CD8-positive, alpha-beta T cell (primary cell): ENCODE measurements at regions of chr10 and their contacts with region 1.

Region 1: DNA sequence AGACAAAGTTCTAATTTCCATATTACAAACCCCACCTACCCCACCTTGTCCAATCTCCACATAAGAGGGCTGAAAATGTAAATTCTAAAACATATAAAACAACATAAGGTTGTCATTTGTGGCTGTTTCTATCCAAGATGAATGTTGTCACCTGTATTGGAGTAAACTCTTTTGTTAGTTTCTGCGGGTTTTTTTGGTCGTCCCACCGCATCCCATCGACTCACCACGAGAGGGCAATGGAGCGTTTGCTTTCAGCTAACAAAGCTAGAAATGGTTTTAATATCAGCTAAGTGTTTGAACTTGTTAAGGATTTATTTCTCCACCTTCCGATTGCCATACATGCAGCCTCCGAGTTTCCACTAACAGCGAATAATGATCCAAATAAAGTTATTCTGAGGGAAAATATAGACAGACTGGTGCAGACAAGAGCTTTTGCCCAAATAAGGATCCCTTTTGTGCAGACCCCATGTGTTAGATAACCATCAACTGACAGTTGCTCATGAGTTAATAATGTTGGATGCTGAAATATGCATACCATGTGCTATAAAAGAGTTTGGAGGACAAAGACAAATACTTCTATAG is 137.2 kb downstream of the ARID5B start:
- DNase-seq: peak; percentile 53 to 82 (median 73)
- ATAC-seq: peak; percentile 89
- H3K4me3 ChIP-seq: no peak overlapping the region
- H3K4me3 Mint-ChIP-seq: peak overlapping the region; percentile 43
- H3K27ac ChIP-seq: no peak overlapping the region
- H3K27ac Mint-ChIP-seq: no peak overlapping the region
- H3K4me1 ChIP-seq: peaks cover 10% of the 10 kb centered on the region
- H3K4me1 Mint-ChIP-seq: peaks cover 54% of the 10 kb centered on the region
- H3K27me3 ChIP-seq: no peaks in the 10 kb centered on the region
- H3K27me3 Mint-ChIP-seq: no peaks in the 10 kb centered on the region
- CTCF ChIP-seq: peak; percentile 86

Region 2: GRCh38 chr10:60964257-60965235 is 1074.2 kb before region 1 on chr10:
- CTCF ChIA-PET with region 1: no interaction called
- POLR2A ChIA-PET with region 1: no interaction called
- intact Hi-C with region 1: no loop called
- DNase-seq: peak in 6 of 9 experiments; percentile 20 to 60 (median 40)
- ATAC-seq: peak; percentile 51
- H3K4me3 ChIP-seq: no peak overlapping the region
- H3K4me3 Mint-ChIP-seq: no peak overlapping the region
- H3K27ac ChIP-seq: no peak overlapping the region
- H3K27ac Mint-ChIP-seq: no peak overlapping the region
- H3K4me1 ChIP-seq: no peaks in the 10 kb centered on the region
- H3K4me1 Mint-ChIP-seq: no peaks in the 10 kb centered on the region
- H3K27me3 ChIP-seq: no peaks in the 10 kb centered on the region
- H3K27me3 Mint-ChIP-seq: peaks cover 9% of the 10 kb centered on the region
- CTCF ChIP-seq: peak; percentile 65

Region 3: DNA sequence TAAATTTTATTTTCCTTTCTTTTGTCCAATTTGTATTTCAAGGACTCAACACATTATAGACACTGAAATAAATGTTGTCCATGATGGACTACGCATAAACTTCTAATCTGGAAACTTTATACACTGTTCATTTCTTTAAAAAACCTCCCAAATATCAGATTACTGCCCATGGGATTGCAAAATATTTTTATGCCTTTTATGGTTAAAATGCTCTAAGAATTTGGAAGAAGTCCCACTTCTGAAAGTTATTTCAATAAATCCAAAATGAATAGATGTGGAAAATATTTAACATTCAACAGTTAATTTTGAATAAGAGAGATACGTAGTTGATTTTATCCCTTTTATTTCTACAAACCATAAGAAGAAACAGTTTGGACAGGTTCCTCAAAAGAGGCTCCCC is 329.9 kb before region 1 on chr10:
- CTCF ChIA-PET with region 1: no interaction called
- POLR2A ChIA-PET with region 1: no interaction called
- intact Hi-C with region 1: no loop called
- DNase-seq: no peak
- ATAC-seq: no peak
- H3K4me3 ChIP-seq: no peak overlapping the region
- H3K4me3 Mint-ChIP-seq: no peak overlapping the region
- H3K27ac ChIP-seq: no peak overlapping the region
- H3K27ac Mint-ChIP-seq: no peak overlapping the region
- H3K4me1 ChIP-seq: no peaks in the 10 kb centered on the region
- H3K4me1 Mint-ChIP-seq: no peaks in the 10 kb centered on the region
- H3K27me3 ChIP-seq: no peaks in the 10 kb centered on the region
- H3K27me3 Mint-ChIP-seq: no peaks in the 10 kb centered on the region
- CTCF ChIP-seq: no peak

Region 4: GRCh38 chr10:61750929-61751471 is 287.7 kb before region 1 on chr10:
- CTCF ChIA-PET with region 1: interaction called, 4 read pairs
- POLR2A ChIA-PET with region 1: interaction called, 6 read pairs
- intact Hi-C with region 1: loop called in 1 of 2 experiments (anchors 10 kb)
- DNase-seq: peak; percentile 27 to 79 (median 64)
- ATAC-seq: peak; percentile 95
- H3K4me3 ChIP-seq: no peak overlapping the region
- H3K4me3 Mint-ChIP-seq: no peak overlapping the region
- H3K27ac ChIP-seq: no peak overlapping the region
- H3K27ac Mint-ChIP-seq: no peak overlapping the region
- H3K4me1 ChIP-seq: peaks cover 9% of the 10 kb centered on the region
- H3K4me1 Mint-ChIP-seq: peaks cover 21% of the 10 kb centered on the region
- H3K27me3 ChIP-seq: no peaks in the 10 kb centered on the region
- H3K27me3 Mint-ChIP-seq: no peaks in the 10 kb centered on the region
- CTCF ChIP-seq: peak; percentile 67

Region 5: DNA sequence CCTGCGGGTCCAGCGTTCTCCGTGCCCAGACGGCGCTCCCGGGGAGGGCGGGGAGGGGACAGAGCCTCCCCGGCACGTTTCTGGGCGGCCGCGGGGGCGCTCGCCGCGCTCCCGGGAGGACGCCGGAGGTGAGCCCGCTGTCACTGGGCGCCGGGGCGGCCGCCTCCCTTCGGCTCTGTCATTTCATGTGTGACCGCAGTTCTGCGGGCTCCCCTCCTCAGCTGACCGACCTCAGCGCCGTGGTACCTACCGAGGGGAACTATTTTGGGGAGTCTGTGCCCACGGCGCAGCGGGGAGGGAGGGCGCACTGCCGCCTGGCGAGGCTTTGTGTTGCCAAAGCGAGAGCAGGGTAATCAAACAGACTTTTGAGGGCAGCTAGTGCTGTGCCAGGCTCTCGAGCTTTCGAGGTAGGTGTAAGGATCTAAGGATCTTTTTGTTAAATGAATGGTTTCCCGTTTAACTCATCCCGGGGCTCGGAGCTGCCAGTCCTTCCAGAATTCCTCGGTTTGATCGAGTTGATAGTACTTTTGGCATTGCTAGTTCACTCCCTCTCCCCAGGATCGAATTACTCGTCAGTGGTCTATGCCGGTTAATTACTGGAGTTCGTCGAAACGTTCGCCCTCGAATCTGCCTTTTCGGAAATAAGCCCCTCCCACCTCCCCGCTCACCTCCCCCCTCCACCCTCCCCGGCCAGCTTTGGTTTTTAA is 135.3 kb before region 1 on chr10:
- CTCF ChIA-PET with region 1: interaction called, 30 read pairs
- POLR2A ChIA-PET with region 1: interaction called, 6 read pairs
- intact Hi-C with region 1: loop called (anchors 2 to 5 kb)
- DNase-seq: peak; percentile 39 to 83 (median 67)
- ATAC-seq: peak; percentile 41
- H3K4me3 ChIP-seq: peak overlapping the region; percentile 91 to 93
- H3K4me3 Mint-ChIP-seq: peak overlapping the region; percentile 84
- H3K27ac ChIP-seq: peak overlapping the region; percentile 94 to 95
- H3K27ac Mint-ChIP-seq: peak overlapping the region; percentile 97
- H3K4me1 ChIP-seq: peaks cover 24% of the 10 kb centered on the region
- H3K4me1 Mint-ChIP-seq: peaks cover 44% of the 10 kb centered on the region
- H3K27me3 ChIP-seq: no peaks in the 10 kb centered on the region
- H3K27me3 Mint-ChIP-seq: no peaks in the 10 kb centered on the region
- CTCF ChIP-seq: peak; percentile 22

Region 6: DNA sequence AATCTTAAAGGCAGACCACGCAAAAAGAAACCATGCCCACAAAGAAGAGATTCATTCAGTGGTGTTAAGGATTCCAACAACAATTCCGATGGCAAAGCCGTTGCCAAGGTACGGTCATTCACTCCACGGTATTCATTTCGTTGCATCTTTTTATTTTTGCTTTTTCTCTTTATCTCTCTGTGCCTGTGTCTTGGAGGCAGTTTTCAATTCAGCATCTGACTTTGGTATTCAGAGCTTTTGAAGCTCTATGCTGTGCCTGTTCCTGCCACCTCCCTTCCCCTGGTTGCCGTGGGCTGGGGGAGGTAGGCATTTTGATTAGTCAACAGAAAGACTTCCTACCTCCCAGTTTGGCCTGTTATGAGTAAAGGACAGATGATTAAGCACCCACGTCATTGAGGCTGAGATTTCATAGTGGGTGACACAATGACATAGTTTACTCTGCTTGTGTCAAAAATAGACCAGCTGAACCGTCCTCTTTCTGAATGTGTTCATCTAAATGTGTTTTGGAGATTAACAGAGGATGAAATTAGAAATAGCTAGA is 12.3 kb after region 1 on chr10:
- CTCF ChIA-PET with region 1: interaction called, 22 read pairs
- POLR2A ChIA-PET with region 1: interaction called, 6 read pairs
- intact Hi-C with region 1: loop called in 1 of 2 experiments (anchors 2 kb)
- DNase-seq: peak; percentile 32 to 87 (median 57)
- ATAC-seq: peak; percentile 74
- H3K4me3 ChIP-seq: peak overlapping the region in 1 of 2 experiments; percentile 36
- H3K4me3 Mint-ChIP-seq: peak overlapping the region; percentile 74
- H3K27ac ChIP-seq: peak overlapping the region; percentile 14 to 73
- H3K27ac Mint-ChIP-seq: peak overlapping the region; percentile 86
- H3K4me1 ChIP-seq: peaks cover 38% of the 10 kb centered on the region
- H3K4me1 Mint-ChIP-seq: peaks cover 78% of the 10 kb centered on the region
- H3K27me3 ChIP-seq: no peaks in the 10 kb centered on the region
- H3K27me3 Mint-ChIP-seq: no peaks in the 10 kb centered on the region
- CTCF ChIP-seq: no peak

Region 7: DNA sequence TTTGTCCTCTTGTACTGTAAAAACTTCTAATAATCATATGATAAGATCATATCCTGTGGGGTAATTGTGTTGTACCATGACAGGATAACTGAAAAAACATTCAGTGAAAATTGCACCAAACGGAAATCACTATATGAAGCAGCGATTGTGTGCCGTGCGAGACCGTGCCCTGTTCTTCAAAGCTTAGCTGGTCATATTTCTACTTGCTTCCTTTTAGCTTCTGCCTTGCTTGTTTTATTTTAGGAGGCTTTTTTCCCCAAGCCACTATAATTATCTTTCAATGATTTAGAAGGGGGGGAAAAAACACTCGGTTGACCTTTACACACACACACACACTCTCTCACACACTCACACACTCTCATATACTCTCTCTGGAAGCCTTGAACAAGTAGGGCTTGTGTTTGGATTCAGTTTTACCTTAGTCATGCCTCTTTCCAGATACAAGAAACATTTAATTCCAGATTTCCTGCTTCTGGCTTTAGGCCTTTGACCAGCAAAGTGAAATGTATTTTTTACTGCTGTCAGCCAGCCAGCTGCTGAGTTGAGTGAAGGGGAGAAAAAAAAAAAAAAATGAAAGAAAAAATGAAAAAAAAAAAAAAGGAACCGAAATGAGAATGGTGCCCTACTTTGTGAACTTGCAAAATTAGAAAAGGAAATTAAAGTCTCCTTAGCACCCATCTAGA is 44.2 kb after region 1 on chr10:
- CTCF ChIA-PET with region 1: interaction called, 5 read pairs
- POLR2A ChIA-PET with region 1: no interaction called
- intact Hi-C with region 1: loop called in 1 of 2 experiments (anchors 2 kb)
- DNase-seq: peak in 8 of 9 experiments; percentile 9 to 68 (median 36)
- ATAC-seq: peak; percentile 86
- H3K4me3 ChIP-seq: no peak overlapping the region
- H3K4me3 Mint-ChIP-seq: peak overlapping the region; percentile 46
- H3K27ac ChIP-seq: peak overlapping the region in 1 of 2 experiments; percentile 68
- H3K27ac Mint-ChIP-seq: peak overlapping the region; percentile 55
- H3K4me1 ChIP-seq: peaks cover 19% of the 10 kb centered on the region
- H3K4me1 Mint-ChIP-seq: peaks cover 43% of the 10 kb centered on the region
- H3K27me3 ChIP-seq: no peaks in the 10 kb centered on the region
- H3K27me3 Mint-ChIP-seq: no peaks in the 10 kb centered on the region
- CTCF ChIP-seq: no peak

Region 8: GRCh38 chr10:62237966-62238365 is 199.3 kb after region 1 on chr10:
- CTCF ChIA-PET with region 1: interaction called, 138 read pairs
- POLR2A ChIA-PET with region 1: no interaction called
- intact Hi-C with region 1: no loop called
- DNase-seq: no peak
- ATAC-seq: no peak
- H3K4me3 ChIP-seq: no peak overlapping the region
- H3K4me3 Mint-ChIP-seq: no peak overlapping the region
- H3K27ac ChIP-seq: no peak overlapping the region
- H3K27ac Mint-ChIP-seq: no peak overlapping the region
- H3K4me1 ChIP-seq: peaks cover 6% of the 10 kb centered on the region
- H3K4me1 Mint-ChIP-seq: peaks cover 31% of the 10 kb centered on the region
- H3K27me3 ChIP-seq: no peaks in the 10 kb centered on the region
- H3K27me3 Mint-ChIP-seq: no peaks in the 10 kb centered on the region
- CTCF ChIP-seq: no peak

Region 9: DNA sequence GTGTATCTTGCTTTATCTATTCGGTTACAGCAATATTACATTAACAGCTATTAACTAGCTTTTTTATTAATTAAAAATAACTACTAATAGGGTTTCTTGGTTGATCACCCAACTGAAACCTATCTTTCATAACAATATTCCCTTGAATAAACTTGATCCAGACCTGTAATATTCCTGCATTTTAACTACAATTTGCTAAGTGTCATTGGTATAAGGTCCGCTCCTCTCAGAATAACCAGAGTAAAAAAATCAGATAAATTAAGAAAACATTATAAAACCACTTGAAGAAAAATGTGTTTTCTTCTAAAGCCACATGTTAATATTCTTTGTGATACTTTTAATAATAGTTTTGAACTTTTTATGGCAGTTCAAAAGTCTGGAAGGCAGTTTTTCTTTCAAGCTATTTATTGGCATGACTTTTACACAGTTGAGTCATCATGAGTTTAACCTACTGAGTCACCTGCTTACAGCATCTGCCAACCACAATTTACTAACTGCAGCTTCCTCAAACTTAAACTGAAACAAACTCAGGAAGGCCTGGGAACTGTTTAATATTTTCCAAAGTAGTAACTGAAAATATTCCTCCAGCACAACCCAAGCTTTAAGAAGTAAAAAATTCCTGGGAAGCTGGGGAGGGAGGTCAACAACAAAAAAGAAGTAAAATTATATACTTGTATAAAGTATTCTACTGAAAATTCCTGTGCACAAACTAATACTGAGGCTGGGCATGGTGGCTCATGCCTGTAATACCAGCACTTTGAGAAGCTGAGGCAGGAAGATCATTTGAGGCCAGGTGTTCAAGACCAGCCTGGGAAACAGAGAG is 1197.6 kb after region 1 on chr10:
- CTCF ChIA-PET with region 1: no interaction called
- POLR2A ChIA-PET with region 1: no interaction called
- intact Hi-C with region 1: no loop called
- DNase-seq: peak in 2 of 9 experiments; percentile 47 to 64
- ATAC-seq: peak; percentile 77
- H3K4me3 ChIP-seq: no peak overlapping the region
- H3K4me3 Mint-ChIP-seq: no peak overlapping the region
- H3K27ac ChIP-seq: peak overlapping the region in 1 of 2 experiments; percentile 46
- H3K27ac Mint-ChIP-seq: no peak overlapping the region
- H3K4me1 ChIP-seq: peaks cover 47% of the 10 kb centered on the region
- H3K4me1 Mint-ChIP-seq: peaks cover 64% of the 10 kb centered on the region
- H3K27me3 ChIP-seq: no peaks in the 10 kb centered on the region
- H3K27me3 Mint-ChIP-seq: no peaks in the 10 kb centered on the region
- CTCF ChIP-seq: no peak